ENCODE measurements at regions of chr10 and their contacts with region 1.

Region 1: GRCh38 chr10:43292755-43293676 is 26.2 kb upstream of the RASGEF1A start:
- H3K4me3 ChIP-seq: no peak overlapping the region
- H3K27ac ChIP-seq: no peak overlapping the region
- H3K4me1 ChIP-seq: no peaks in the 10 kb centered on the region; the same call in 1 of the 2 replicates
- CTCF ChIP-seq: peak; percentile 53

Region 2: GRCh38 chr10:43348511-43349312 is 55.7 kb after region 1 on chr10:
- CTCF ChIA-PET with region 1: interaction called, 16 read pairs
- POLR2A ChIA-PET with region 1: no interaction called
- H3K4me3 ChIP-seq: no peak overlapping the region
- H3K27ac ChIP-seq: no peak overlapping the region
- H3K4me1 ChIP-seq: peaks cover 6% of the 10 kb centered on the region
- CTCF ChIP-seq: peak; percentile 83

Region 3: DNA sequence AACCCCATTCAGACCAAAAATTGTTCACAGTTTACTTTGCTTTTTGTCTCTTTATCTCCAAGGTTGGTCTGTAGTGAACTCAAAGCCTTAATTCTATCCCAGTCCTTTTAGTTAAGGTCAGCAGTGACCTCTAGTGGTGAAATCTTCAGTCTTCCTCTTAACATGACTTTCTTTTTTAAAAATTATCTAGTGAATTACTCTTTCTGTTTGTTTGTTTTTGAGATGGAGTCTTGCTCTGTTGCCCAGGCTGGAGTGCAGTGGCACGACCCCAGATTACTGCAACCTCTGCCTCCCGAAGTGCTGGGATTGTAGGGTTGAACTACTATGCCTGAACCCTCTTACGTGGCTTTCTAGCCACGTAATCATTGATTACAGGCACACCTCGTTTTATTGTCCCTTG is 168.9 kb after region 1 on chr10:
- CTCF ChIA-PET with region 1: interaction called, 17 read pairs
- POLR2A ChIA-PET with region 1: no interaction called
- H3K4me3 ChIP-seq: no peak overlapping the region
- H3K27ac ChIP-seq: no peak overlapping the region
- H3K4me1 ChIP-seq: no peaks in the 10 kb centered on the region
- CTCF ChIP-seq: peak; percentile 60